Mammary epithelial cell (primary cell): ENCODE measurements at regions of chr1 and their contacts with region 1.

Region 1: DNA sequence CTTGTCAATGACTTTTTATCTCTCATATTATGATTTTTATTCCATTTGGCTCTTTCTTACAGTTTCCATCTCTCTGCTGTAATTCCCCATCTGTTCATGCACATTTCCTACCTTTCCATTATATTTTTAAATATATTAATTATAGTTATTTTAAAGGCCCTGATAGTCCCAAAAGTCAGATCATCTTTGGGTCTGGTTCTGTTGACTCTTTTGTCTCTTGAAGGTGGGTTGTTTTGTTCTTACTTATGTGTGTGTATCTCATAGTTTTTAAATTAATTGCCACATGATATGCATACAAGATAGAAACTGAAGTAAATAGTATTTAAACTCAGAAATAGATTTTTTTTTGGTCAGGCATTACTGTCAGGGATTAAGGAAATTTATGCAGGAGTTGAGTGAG is 178.0 kb upstream of the AJAP1 start:
- DNase-seq: no peak
- H3K4me3 ChIP-seq: no peak overlapping the region
- H3K27ac ChIP-seq: no peak overlapping the region
- H3K4me1 ChIP-seq: no peaks in the 10 kb centered on the region
- H3K27me3 ChIP-seq: no peaks in the 10 kb centered on the region
- CTCF ChIP-seq: no peak

Region 2: GRCh38 chr1:4425892-4426291 is 50.5 kb before region 1 on chr1:
- CTCF ChIA-PET with region 1: no interaction called
- dilution Hi-C with region 1: loop called (anchors 10 kb)
- in situ Hi-C with region 1: no loop called
- intact Hi-C with region 1: no loop called
- DNase-seq: no peak
- H3K4me3 ChIP-seq: no peak overlapping the region
- H3K27ac ChIP-seq: no peak overlapping the region
- H3K4me1 ChIP-seq: no peaks in the 10 kb centered on the region
- H3K27me3 ChIP-seq: no peaks in the 10 kb centered on the region
- CTCF ChIP-seq: no peak

Region 3: GRCh38 chr1:4603295-4604110 is 127.1 kb after region 1 on chr1:
- CTCF ChIA-PET with region 1: no interaction called
- dilution Hi-C with region 1: no loop called
- in situ Hi-C with region 1: no loop called
- intact Hi-C with region 1: no loop called
- DNase-seq: peak; percentile 53
- H3K4me3 ChIP-seq: no peak overlapping the region
- H3K27ac ChIP-seq: no peak overlapping the region
- H3K4me1 ChIP-seq: no peaks in the 10 kb centered on the region
- H3K27me3 ChIP-seq: no peaks in the 10 kb centered on the region
- CTCF ChIP-seq: no peak

Region 4: GRCh38 chr1:4794020-4794780 is 317.8 kb after region 1 on chr1:
- CTCF ChIA-PET with region 1: no interaction called
- dilution Hi-C with region 1: no loop called
- in situ Hi-C with region 1: no loop called
- intact Hi-C with region 1: no loop called
- DNase-seq: peak; percentile 4
- H3K4me3 ChIP-seq: no peak overlapping the region
- H3K27ac ChIP-seq: no peak overlapping the region
- H3K4me1 ChIP-seq: no peaks in the 10 kb centered on the region
- H3K27me3 ChIP-seq: no peaks in the 10 kb centered on the region
- CTCF ChIP-seq: no peak